Activated naive CD4-positive, alpha-beta T cell treated with anti-CD3 and anti-CD28 coated beads for 36 hours (primary cell): ENCODE measurements at regions of chr7 and their contacts with region 1.

Region 1: GRCh38 chr7:30515761-30516160 is 11.1 kb upstream of the GGCT start:
- DNase-seq: no peak
- H3K4me3 Mint-ChIP-seq: no peak overlapping the region
- H3K27ac Mint-ChIP-seq: no peak overlapping the region
- H3K4me1 Mint-ChIP-seq: peaks cover 11% of the 10 kb centered on the region
- H3K27me3 Mint-ChIP-seq: no peaks in the 10 kb centered on the region

Region 2: GRCh38 chr7:30308389-30308788 is 207.4 kb before region 1 on chr7:
- CTCF ChIA-PET with region 1: no interaction called
- intact Hi-C with region 1: no loop called
- DNase-seq: no peak
- H3K4me3 Mint-ChIP-seq: no peak overlapping the region
- H3K27ac Mint-ChIP-seq: no peak overlapping the region
- H3K4me1 Mint-ChIP-seq: peaks cover 54% of the 10 kb centered on the region
- H3K27me3 Mint-ChIP-seq: no peaks in the 10 kb centered on the region

Region 3: DNA sequence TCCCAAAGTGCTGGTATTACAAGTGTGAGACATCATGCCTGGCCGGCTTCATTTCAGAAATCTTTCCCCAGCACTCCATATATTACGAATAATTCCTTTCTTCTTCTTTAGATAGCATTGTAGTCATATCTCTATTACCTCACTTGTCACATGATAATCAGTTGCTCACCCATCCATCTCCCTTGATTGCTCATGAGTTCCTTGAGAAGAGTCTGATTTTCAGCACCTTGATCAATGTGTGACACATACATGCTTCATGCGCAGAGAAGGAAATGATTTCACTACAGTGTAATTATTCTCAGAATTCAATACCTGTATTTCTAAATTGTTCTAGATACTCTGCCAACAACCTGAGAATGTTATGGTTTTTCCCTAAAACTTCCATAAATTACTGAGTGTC is 15.5 kb after region 1 on chr7:
- CTCF ChIA-PET with region 1: no interaction called
- intact Hi-C with region 1: loop called (anchors 2 kb)
- DNase-seq: no peak
- H3K4me3 Mint-ChIP-seq: no peak overlapping the region
- H3K27ac Mint-ChIP-seq: no peak overlapping the region
- H3K4me1 Mint-ChIP-seq: peaks cover 6% of the 10 kb centered on the region
- H3K27me3 Mint-ChIP-seq: no peaks in the 10 kb centered on the region

Region 4: GRCh38 chr7:30594549-30595435 is 79.0 kb after region 1 on chr7 and contains the start of gene GARS1:
- CTCF ChIA-PET with region 1: no interaction called
- intact Hi-C with region 1: no loop called
- DNase-seq: peak; percentile 88
- H3K4me3 Mint-ChIP-seq: peak within 1 kb of the TSS; percentile 96
- H3K27ac Mint-ChIP-seq: peak within 1 kb of the TSS; percentile 97
- H3K4me1 Mint-ChIP-seq: peaks cover 49% of the 10 kb centered on the region
- H3K27me3 Mint-ChIP-seq: no peaks in the 10 kb centered on the region
- total RNA-seq, gene GARS1: 367 to 385 TPM